ENCODE measurements at regions of chr20 and their contacts with region 1.

Region 1: DNA sequence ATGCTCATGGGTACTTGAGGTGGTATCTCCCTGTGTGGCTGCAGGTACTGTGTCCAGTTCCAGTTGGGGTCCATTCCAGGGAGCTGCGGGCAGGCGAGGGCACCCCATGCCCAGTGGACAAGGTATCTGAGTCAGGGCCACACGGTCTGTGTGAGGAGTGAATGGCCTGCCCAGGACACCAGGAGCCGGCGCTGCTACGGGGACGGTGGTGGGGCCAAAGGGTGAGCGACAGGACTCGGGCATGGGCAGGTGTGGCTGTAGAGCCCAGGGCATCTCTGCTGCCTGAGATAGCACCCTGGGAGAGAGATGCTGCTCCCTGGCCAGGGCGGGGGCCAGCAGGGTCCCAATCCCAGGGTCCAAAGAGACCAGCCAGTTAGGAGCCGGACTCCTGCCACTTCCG is 57.6 kb upstream of the ZNFX1 start:
- DNase-seq: no peak
- ATAC-seq: no peak
- H3K4me3 Mint-ChIP-seq: no peak overlapping the region
- H3K27ac Mint-ChIP-seq: no peak overlapping the region
- H3K4me1 Mint-ChIP-seq: no peaks in the 10 kb centered on the region
- H3K27me3 Mint-ChIP-seq: peaks cover 14% of the 10 kb centered on the region

Region 2: DNA sequence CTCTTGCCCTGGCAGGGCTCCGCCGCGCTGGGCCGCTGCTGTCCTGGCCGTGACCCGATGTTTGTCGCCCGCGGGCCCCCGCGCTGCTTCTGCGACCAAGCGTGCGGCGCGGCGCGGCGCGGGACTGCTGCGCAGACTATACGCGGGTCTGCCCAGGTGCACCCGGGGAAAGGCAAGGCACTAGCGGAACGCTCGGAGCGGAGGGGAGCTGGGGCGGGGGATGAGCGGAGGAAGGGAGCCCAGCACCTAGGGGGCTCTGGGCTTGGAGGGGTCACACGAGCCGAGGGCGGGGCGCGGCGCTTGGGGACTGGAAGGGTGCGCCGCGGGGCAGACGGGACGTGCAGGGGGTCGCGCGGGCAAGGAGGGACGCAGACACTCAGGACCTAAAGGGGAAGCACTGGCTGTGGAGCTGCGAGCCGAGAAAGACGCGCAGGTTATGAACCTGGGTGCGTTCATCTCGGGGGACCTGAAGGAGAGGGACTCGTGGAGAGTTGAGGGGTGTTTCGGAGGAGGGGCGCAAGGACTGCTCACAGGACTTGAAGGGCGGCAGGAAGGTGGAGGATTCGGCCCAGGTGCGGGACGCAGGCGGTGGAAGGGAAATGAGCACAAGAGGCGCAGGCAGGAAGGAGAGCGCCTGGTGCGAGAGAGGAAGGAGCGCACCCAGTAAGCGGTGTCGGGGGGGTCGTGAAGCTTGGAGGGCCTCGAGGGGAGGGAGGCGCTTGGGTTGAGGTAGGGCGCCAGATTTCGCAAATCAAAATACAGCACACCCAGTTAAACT is 16.9 kb before region 1 on chr20:
- CTCF ChIA-PET with region 1: interaction called, 12 read pairs
- POLR2A ChIA-PET with region 1: no interaction called
- DNase-seq: peak; percentile 41
- ATAC-seq: peak; percentile 66
- H3K4me3 Mint-ChIP-seq: peak overlapping the region; percentile 78
- H3K27ac Mint-ChIP-seq: no peak overlapping the region
- H3K4me1 Mint-ChIP-seq: peaks cover 22% of the 10 kb centered on the region
- H3K27me3 Mint-ChIP-seq: peaks cover 65% of the 10 kb centered on the region

Region 3: GRCh38 chr20:49534255-49534712 is 198.8 kb after region 1 on chr20:
- CTCF ChIA-PET with region 1: interaction called, 15 read pairs
- POLR2A ChIA-PET with region 1: no interaction called
- DNase-seq: peak; percentile 83
- ATAC-seq: peak; percentile 85
- H3K4me3 Mint-ChIP-seq: peak overlapping the region; percentile 34
- H3K27ac Mint-ChIP-seq: peak overlapping the region; percentile 81
- H3K4me1 Mint-ChIP-seq: peaks cover 21% of the 10 kb centered on the region
- H3K27me3 Mint-ChIP-seq: peaks cover 6% of the 10 kb centered on the region

Measured in activated CD8-positive, alpha-beta T cell treated with anti-CD3 and anti-CD28 coated beads, Interleukin-2, amount 10 ng/mL, durations not matched to agents 7 days and 5 days (primary cell).